Activated naive CD4-positive, alpha-beta T cell treated with anti-CD3 and anti-CD28 coated beads, Interleukin-2, amount 10 ng/mL, durations not matched to agents 7 days and 5 days (primary cell): ENCODE measurements at regions of chr6 and their contacts with region 1.

Region 1: DNA sequence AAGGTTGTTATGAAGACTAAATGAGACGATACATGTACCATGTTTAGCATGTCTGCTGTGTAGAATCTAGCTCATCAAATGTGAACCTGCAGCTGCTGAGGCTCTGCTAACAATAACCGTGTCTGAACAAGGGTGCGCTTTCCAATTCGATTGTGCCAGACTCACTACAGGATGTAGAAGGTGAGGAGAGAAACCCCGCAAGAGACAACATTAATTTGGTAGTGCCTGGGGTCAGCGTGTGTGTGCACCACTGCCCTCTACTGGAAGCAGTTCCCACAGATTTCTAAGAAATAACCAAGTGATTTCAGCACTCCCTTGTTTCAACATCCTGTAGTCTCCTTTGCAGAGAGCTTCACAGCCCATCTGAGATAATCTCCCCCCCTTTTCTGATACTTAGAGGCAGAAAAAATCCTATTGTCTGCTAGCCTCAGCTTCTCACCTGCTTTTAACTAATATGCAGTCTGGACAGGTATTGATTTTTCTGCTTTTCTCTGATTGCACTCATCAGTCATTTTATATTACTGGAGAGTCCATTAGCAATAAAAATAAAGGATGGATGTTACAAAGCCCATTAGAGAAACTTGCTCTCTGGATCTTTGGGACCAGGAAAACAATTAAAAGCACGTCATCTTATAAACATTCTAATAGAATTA is 96.7 kb upstream of the BACH2 start:
- DNase-seq: peak; percentile 85
- H3K4me3 Mint-ChIP-seq: no peak overlapping the region
- H3K27ac Mint-ChIP-seq: peak overlapping the region; percentile 1
- H3K4me1 Mint-ChIP-seq: peaks cover 55% of the 10 kb centered on the region
- H3K27me3 Mint-ChIP-seq: no peaks in the 10 kb centered on the region

Region 2: DNA sequence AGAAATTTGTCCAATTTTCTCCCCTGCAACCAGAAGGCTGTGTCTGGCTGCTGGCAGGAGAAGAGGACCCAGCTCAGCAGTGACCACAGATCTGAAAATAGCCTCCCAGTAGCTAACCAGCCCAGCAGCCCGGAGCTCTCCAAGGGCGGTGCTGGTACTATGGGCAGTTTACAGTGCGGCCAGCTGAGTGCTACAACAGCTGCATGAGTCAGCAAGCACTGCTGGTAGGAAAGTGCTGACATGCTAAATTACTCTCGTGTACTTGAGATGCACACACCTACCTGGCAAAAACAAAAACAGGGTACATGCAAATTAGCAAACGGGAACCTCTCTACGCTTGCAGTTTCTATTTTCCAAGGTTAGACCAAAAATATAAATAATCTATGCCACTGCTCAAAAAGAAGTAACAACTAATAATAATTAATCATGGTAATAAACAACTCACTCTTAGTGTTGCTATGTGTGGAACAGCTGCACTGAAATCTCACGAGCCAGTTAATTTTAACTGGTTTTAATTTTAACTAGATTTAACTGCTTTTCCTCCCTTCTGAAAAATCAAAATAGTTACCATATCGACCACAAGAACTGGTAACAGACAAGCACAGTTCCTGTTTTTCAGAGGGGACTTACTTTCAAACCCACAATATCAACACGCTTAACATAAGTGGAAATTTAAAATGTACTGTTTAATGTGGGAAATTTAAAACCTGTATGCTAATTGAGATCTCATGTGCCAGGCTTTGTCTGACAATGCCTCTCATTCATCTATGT is 107.6 kb before region 1 on chr6:
- CTCF ChIA-PET with region 1: interaction called, 45 read pairs
- DNase-seq: peak; percentile 70
- H3K4me3 Mint-ChIP-seq: peak overlapping the region; percentile 73
- H3K27ac Mint-ChIP-seq: peak overlapping the region; percentile 96
- H3K4me1 Mint-ChIP-seq: peaks cover 93% of the 10 kb centered on the region
- H3K27me3 Mint-ChIP-seq: no peaks in the 10 kb centered on the region

Region 3: DNA sequence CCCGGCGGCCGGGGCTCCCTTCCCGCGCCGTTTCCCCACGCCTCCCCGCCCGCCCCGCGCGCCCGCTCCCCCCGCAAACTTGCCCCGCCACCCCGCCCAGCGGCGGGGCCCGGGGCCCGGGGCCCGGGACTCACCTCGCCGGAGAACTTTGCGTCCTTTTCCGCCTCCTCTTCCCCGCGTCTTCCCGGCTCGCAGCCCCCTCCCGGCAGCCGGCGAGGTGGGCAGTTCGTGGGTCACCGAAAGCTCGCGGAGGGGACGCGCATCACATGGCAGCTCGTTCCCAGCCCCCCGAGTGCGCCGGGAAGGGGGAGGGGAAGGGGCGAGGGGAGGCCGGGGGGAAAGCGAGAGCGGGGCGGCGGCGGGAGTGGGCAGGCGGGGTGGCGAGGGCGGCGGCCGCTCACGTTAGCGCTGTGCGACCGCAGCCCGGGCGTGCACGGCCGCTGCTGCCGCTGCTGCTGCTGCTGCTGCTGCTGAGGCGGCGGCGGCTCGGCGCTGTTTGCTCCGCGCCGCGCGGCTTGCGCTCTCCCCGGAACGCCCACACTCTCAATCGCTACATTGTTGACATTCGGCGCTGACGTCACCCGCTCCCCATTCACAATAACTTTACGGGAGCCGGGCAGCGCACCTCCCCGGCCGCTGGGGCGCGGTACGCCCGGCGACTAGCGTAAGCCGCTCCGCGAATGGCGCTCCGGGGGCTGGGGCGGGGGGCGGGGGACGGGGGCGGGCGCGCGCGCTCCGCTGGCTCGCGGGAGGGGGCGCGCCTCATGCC is 96.8 kb before region 1 on chr6 and contains the start of gene BACH2:
- CTCF ChIA-PET with region 1: interaction called, 12 read pairs
- DNase-seq: peak; percentile 97
- H3K4me3 Mint-ChIP-seq: peak within 1 kb of the TSS; percentile 81
- H3K27ac Mint-ChIP-seq: peak within 1 kb of the TSS; percentile 99
- H3K4me1 Mint-ChIP-seq: peaks cover 29% of the 10 kb centered on the region
- H3K27me3 Mint-ChIP-seq: peaks cover 21% of the 10 kb centered on the region

Region 4: DNA sequence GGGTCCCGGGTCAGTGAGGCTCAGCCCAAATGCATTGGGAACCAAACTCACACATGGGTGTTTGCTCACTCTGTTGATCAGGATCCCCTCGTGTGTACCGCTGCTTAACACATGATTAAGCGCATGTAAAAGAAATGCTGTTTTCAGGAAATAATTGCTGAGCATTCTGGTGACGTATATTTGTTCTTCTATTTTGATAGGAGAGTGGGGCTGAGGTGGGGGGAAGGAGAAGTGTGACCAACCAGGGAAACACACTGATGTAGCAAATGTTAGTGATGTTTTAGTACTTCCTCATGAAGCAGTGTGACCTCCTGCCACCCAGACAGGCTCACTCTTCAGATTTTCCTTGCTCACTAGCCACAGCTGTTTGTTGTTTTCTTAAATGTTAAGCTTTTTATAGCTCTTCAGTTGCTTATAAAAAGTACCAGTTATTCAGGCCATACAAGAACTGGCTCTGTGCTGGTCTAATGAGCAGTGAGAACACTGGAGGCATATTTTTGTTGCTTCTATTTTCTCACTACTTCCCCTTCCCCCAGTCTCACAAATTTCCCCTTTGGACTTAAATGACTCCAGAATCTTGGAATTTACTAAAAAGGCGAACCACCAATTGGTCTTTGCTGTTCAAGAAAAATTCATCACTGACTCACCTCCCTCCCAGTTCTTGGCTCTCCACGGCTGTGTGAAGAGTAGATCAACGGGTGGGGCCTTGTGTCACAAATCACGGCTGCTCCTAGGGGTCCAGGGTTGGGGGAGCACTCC is 17.5 kb before region 1 on chr6:
- CTCF ChIA-PET with region 1: interaction called, 15 read pairs
- DNase-seq: no peak
- H3K4me3 Mint-ChIP-seq: no peak overlapping the region
- H3K27ac Mint-ChIP-seq: no peak overlapping the region
- H3K4me1 Mint-ChIP-seq: peaks cover under 1% of the 10 kb centered on the region
- H3K27me3 Mint-ChIP-seq: peaks cover 4% of the 10 kb centered on the region

Region 5: GRCh38 chr6:90403489-90404381 is 10.4 kb after region 1 on chr6:
- CTCF ChIA-PET with region 1: interaction called, 21 read pairs
- DNase-seq: no peak
- H3K4me3 Mint-ChIP-seq: no peak overlapping the region
- H3K27ac Mint-ChIP-seq: peak overlapping the region; percentile 77
- H3K4me1 Mint-ChIP-seq: peaks cover 75% of the 10 kb centered on the region
- H3K27me3 Mint-ChIP-seq: no peaks in the 10 kb centered on the region

Region 6: DNA sequence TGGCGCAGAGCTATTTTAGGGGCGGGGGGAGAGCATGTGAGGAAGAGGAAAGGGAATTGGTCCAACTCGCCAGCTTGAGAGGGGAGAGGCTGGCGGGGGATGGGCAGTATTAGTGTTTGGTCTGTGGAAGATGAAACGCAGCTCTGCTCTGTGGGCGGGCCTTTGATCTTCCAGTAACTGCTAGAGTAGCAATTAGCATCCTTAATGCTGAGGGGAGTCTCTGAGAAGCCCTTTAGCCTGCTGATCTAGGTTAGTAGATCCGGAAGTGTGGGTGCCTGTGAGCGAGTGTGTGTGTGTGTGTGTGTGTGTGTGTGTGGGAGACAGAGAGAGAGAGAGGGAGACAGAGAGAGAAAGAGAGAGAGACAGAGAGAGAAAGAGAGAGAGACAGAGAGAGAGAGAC is 20.5 kb after region 1 on chr6:
- CTCF ChIA-PET with region 1: interaction called, 24 read pairs
- DNase-seq: peak; percentile 84
- H3K4me3 Mint-ChIP-seq: peak overlapping the region; percentile 48
- H3K27ac Mint-ChIP-seq: peak overlapping the region; percentile 75
- H3K4me1 Mint-ChIP-seq: peaks cover 63% of the 10 kb centered on the region
- H3K27me3 Mint-ChIP-seq: peaks cover 4% of the 10 kb centered on the region

Region 7: GRCh38 chr6:90425161-90425641 is 31.8 kb after region 1 on chr6:
- CTCF ChIA-PET with region 1: interaction called, 17 read pairs
- DNase-seq: no peak
- H3K4me3 Mint-ChIP-seq: peak overlapping the region; percentile 47
- H3K27ac Mint-ChIP-seq: peak overlapping the region; percentile 87
- H3K4me1 Mint-ChIP-seq: peaks cover 19% of the 10 kb centered on the region
- H3K27me3 Mint-ChIP-seq: no peaks in the 10 kb centered on the region

Region 8: GRCh38 chr6:90715093-90715655 is 321.8 kb after region 1 on chr6:
- CTCF ChIA-PET with region 1: no interaction called
- DNase-seq: no peak
- H3K4me3 Mint-ChIP-seq: no peak overlapping the region
- H3K27ac Mint-ChIP-seq: no peak overlapping the region
- H3K4me1 Mint-ChIP-seq: no peaks in the 10 kb centered on the region
- H3K27me3 Mint-ChIP-seq: peaks cover 4% of the 10 kb centered on the region